ENCODE measurements at regions of chr5 and their contacts with region 1.

Region 1: DNA sequence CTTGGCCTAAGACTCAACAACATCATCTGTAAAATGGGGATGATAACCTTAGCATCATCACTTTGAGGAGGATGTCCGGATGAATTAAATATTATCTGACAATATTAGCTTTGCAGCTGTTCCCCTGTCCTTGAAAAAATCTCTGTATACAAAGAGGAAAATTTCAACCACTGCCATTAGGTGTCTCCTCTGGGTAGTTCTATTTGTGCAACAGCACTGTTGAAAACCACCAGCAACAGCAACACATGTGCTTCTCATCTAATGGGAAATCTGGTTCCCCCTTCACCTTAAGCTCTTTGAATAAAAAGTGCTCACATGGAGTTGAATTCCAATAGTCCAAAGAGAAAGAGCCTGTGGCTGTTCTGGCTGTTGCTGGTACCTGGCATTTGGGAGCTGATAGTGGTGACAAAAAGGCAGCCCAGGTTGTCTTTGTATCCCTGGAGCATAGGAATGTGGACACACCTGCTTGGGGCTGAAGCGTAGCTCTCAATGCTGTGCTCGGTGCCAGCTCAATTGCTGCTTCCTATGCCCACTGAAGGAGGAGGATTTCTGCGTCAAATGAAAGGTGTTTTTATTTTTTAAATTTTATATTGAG is 322.1 kb upstream of the MSX2 start:
- DNase-seq: no peak
- H3K4me3 ChIP-seq: no peak overlapping the region
- H3K27ac ChIP-seq: no peak overlapping the region
- H3K4me1 ChIP-seq: no peaks in the 10 kb centered on the region
- H3K27me3 ChIP-seq: no peaks in the 10 kb centered on the region
- CTCF ChIP-seq: peak in 1 of 2 donors; percentile 11

Region 2: GRCh38 chr5:174751154-174752000 is 349.1 kb after region 1 on chr5:
- CTCF ChIA-PET with region 1: interaction called, 10 read pairs
- dilution Hi-C with region 1: no loop called
- in situ Hi-C with region 1: no loop called
- intact Hi-C with region 1: no loop called
- DNase-seq: peak; percentile 14
- H3K4me3 ChIP-seq: peak overlapping the region; percentile 38 to 43 (median 39)
- H3K27ac ChIP-seq: no peak overlapping the region
- H3K4me1 ChIP-seq: no peaks in the 10 kb centered on the region
- H3K27me3 ChIP-seq: peaks cover 13% of the 10 kb centered on the region
- CTCF ChIP-seq: no peak